ENCODE measurements at regions of chr15 and their contacts with region 1.

Region 1: DNA sequence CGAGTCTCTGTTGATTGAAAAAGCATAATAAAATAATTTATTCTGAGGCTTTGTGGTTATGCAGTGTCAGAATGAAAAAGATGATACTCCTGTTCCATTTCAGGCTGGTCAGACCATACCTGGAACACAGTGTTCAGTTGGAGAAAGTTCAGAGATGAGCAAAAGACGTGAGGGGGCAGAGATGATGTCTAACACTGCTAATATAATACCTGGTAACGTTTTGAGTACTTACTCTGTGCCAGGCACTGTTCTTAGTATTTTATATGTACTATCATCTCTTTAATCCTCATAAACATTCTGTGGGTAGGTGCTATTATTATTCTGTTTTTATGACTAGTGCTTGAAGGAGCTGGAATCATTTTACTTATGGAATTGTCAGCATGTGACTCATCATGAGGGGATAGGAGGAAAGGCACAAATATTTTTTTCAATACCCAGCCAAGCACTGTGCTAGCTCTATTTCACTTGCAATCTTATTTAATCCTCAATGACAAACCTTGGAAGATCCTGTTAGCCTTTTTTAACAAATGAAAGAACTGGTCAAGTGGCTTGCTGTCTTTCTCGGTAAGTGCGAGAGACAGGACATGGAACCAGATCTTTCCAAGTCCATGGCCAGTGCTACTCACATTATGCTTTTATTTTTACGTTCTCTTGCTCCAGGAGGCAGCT is 31.8 kb downstream of the IQGAP1 start:
- DNase-seq: peak; percentile 62
- H3K4me3 Mint-ChIP-seq: peak overlapping the region; percentile 61
- H3K27ac Mint-ChIP-seq: peak overlapping the region; percentile 90
- H3K4me1 Mint-ChIP-seq: peaks cover 75% of the 10 kb centered on the region
- H3K27me3 Mint-ChIP-seq: no peaks in the 10 kb centered on the region

Region 2: GRCh38 chr15:90352109-90352893 is 67.6 kb before region 1 on chr15 and contains the start of gene ZNF774:
- CTCF ChIA-PET with region 1: interaction called, 3 read pairs
- POLR2A ChIA-PET with region 1: interaction called, 5 read pairs
- intact Hi-C with region 1: loop called (anchors 2 kb)
- DNase-seq: peak; percentile 93
- H3K4me3 Mint-ChIP-seq: peak within 1 kb of the TSS; percentile 87
- H3K27ac Mint-ChIP-seq: no peak within 1 kb of the TSS
- H3K4me1 Mint-ChIP-seq: peaks cover 6% of the 10 kb centered on the region
- H3K27me3 Mint-ChIP-seq: peaks cover 4% of the 10 kb centered on the region
- total RNA-seq, gene ZNF774: 0.68 to 1.1 TPM

Region 3: DNA sequence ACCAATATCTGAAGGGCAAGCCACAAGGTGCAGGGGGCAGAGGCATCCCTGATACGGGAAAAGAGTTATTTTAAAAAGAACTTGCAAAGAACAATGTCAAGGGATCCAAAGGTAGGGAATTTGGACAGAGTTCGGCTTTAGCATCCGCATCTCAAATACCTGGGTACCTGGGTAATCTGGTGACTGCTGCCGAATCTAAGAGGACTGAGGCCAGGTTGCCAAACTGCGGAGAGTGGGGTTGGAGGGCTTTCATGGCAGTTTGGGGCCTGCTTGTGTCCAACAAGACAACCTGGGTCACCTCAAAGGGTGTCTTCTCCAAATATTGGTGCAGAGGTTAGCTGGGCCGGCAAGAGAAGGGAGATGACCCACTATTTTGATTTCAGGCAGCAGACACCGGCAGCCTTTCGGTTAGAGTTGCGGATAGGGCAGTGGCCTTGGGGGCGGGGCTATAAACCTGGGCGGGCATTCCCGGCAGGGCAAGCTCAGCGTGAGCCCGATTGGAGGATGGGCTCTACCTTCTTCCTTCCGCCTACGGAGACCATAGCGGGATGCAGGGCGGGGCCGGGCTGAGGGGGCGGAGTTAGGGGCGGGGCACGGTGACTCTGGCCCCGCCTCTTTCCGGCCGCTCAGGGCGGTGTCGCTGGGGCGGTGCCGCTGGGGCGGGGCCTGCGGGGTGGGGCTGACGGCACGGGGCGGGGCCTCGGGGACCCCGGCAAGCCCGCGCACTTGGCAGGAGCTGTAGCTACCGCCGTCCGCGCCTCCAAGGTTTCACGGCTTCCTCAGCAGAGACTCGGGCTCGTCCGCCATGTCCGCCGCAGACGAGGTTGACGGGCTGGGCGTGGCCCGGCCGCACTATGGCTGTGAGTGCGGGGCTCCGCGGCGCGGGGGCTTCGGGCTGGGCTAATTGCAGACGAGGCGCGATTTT is 32.1 kb before region 1 on chr15 and contains the start of gene IQGAP1:
- CTCF ChIA-PET with region 1: interaction called, 6 read pairs
- POLR2A ChIA-PET with region 1: interaction called, 9 read pairs
- intact Hi-C with region 1: loop called (anchors 1 kb)
- DNase-seq: peak; percentile 98
- H3K4me3 Mint-ChIP-seq: peak within 1 kb of the TSS; percentile 92
- H3K27ac Mint-ChIP-seq: peak within 1 kb of the TSS; percentile 91
- H3K4me1 Mint-ChIP-seq: peaks cover 46% of the 10 kb centered on the region
- H3K27me3 Mint-ChIP-seq: no peaks in the 10 kb centered on the region
- total RNA-seq, gene IQGAP1: 186 to 207 TPM

Region 4: DNA sequence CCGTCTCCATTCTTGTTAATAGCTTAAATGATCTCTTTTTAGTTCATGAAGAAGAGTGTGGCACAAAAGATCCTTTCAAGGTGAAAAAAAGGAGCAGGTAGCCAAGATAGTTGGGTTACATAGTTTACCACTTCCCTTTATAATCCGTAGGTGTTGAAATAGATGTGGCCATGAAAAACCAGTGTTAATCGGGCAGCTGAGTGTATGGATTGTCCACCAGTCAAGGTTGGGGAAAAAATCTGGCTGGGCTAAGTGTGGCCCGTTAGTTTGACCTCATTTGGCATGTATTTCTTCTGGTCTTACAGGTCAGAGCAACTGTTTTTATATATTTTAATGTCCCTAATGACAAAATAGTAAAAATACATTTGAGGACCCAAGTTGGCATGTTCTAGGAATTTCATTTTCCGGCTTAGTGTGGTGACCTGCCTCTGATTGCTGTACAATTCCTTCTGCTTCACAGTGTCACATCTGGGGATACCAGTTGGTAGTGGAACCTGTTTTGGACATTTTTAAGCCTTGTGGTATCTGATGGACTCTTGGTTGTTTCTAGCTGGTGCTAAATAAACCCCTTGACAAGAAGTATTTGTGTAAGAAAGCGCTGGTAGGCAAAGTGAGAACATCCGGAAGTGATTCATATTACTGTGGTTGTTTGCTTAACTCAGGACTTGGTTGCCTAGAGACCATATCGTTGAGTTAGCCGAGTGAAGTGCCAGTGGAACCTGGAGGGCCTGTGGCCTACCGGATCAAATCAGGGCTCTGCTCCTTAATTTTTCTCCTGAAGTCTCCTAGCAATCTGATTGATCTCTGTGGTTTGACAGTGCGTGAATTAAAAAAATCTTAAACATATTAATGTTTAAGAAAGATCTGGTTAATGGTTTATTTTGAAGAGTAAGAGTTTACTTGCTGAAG is 19.2 kb before region 1 on chr15:
- CTCF ChIA-PET with region 1: interaction called, 4 read pairs
- POLR2A ChIA-PET with region 1: interaction called, 8 read pairs
- intact Hi-C with region 1: loop called (anchors 1 kb)
- DNase-seq: peak; percentile 72
- H3K4me3 Mint-ChIP-seq: peak overlapping the region; percentile 57
- H3K27ac Mint-ChIP-seq: peak overlapping the region; percentile 91
- H3K4me1 Mint-ChIP-seq: peaks cover 66% of the 10 kb centered on the region
- H3K27me3 Mint-ChIP-seq: no peaks in the 10 kb centered on the region

Region 5: GRCh38 chr15:90456236-90456635 is 36.4 kb after region 1 on chr15:
- CTCF ChIA-PET with region 1: no interaction called
- POLR2A ChIA-PET with region 1: no interaction called
- intact Hi-C with region 1: no loop called
- DNase-seq: no peak
- H3K4me3 Mint-ChIP-seq: no peak overlapping the region
- H3K27ac Mint-ChIP-seq: no peak overlapping the region
- H3K4me1 Mint-ChIP-seq: peaks cover 7% of the 10 kb centered on the region
- H3K27me3 Mint-ChIP-seq: no peaks in the 10 kb centered on the region

Region 6: GRCh38 chr15:90482124-90483011 is 62.5 kb after region 1 on chr15:
- CTCF ChIA-PET with region 1: interaction called, 5 read pairs
- POLR2A ChIA-PET with region 1: no interaction called
- intact Hi-C with region 1: loop called (anchors 5 kb)
- DNase-seq: peak; percentile 62
- H3K4me3 Mint-ChIP-seq: no peak overlapping the region
- H3K27ac Mint-ChIP-seq: peak overlapping the region; percentile 9
- H3K4me1 Mint-ChIP-seq: peaks cover 30% of the 10 kb centered on the region
- H3K27me3 Mint-ChIP-seq: no peaks in the 10 kb centered on the region

Region 7: DNA sequence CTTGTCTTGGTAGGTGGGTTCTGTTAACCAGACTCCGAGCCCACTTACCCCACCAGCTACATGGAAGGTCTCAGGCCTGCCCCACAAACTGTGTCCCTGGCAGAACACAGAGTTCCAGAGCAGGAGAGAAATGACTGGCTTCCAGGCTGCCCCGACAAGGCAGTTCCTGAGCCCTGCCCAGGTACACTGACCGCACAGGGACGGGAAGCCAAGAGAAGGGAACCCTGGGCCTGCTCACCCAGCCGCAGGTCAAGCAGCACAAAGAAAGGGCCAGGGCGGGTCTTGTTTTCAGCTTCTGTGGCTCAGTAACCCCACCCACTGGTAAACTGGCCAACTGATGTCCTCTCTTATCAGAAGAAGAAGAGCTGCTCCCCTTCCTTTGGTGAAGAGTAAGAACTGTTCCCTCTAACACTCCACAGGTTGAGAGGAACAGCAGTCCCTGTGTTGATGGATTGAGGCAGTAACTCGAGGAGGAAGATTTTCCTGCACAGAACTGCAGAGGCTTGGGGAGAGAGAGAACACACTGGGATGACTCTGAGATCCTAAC is 178.2 kb after region 1 on chr15:
- CTCF ChIA-PET with region 1: no interaction called
- POLR2A ChIA-PET with region 1: interaction called, 3 read pairs
- intact Hi-C with region 1: loop called (anchors 5 kb)
- DNase-seq: peak; percentile 41
- H3K4me3 Mint-ChIP-seq: peak overlapping the region; percentile 31
- H3K27ac Mint-ChIP-seq: peak overlapping the region; percentile 100
- H3K4me1 Mint-ChIP-seq: peaks cover 75% of the 10 kb centered on the region
- H3K27me3 Mint-ChIP-seq: no peaks in the 10 kb centered on the region

Region 8: DNA sequence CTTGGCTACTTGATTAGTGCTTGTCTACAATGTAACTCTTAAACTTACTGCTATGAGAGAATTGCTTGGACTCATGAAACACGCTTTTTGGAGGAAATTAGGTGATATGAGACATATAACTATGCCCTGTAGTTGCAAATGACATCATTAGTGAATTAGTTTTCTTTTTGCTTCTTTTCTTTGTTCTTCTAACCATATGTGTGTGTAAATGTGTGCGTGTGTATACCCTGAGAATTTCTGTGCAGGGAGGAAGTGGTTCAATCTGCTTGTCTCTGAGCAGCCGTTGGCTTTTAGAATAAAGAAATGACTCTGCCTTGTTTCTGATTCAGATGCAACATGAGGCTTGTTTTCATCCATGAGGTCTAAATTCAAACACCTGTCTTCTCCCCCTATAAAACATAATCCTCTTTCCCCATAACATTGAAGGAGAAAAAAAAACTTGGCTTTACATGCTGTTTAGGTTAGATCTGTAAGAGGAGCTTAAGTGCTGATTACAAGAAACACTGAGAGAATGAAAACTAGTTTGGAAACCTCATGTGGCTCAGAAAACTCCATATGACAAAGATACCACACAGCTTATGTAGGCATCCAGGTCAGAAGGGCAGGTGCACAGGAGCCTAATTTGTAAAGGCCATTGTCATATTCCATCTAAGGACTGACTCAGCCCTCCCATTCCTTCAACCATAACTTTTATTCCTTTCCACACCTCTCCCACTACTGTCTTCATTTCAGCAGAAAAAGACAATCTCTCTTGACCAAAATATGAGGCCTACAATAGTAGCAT is 266.8 kb after region 1 on chr15:
- CTCF ChIA-PET with region 1: no interaction called
- POLR2A ChIA-PET with region 1: no interaction called
- intact Hi-C with region 1: loop called (anchors 2 kb)
- DNase-seq: peak; percentile 46
- H3K4me3 Mint-ChIP-seq: no peak overlapping the region
- H3K27ac Mint-ChIP-seq: peak overlapping the region; percentile 90
- H3K4me1 Mint-ChIP-seq: peaks cover 18% of the 10 kb centered on the region
- H3K27me3 Mint-ChIP-seq: peaks cover 3% of the 10 kb centered on the region

Measured in activated CD4-positive, alpha-beta memory T cell treated with anti-CD3 and anti-CD28 coated beads for 36 hours (primary cell).